ENCODE measurements at regions of chr17 and their contacts with region 1.

Region 1: GRCh38 chr17:79045842-79046196 is 21.9 kb downstream of the C1QTNF1 start:
- DNase-seq: peak; percentile 60
- H3K4me3 ChIP-seq: no peak overlapping the region
- H3K27ac ChIP-seq: no peak overlapping the region
- H3K4me1 ChIP-seq: no peaks in the 10 kb centered on the region
- CTCF ChIP-seq: peak; percentile 98

Region 2: GRCh38 chr17:78818932-78819331 is 226.9 kb before region 1 on chr17:
- CTCF ChIA-PET with region 1: no interaction called
- POLR2A ChIA-PET with region 1: no interaction called
- intact Hi-C with region 1: no loop called
- DNase-seq: no peak
- H3K4me3 ChIP-seq: no peak overlapping the region
- H3K27ac ChIP-seq: no peak overlapping the region
- H3K4me1 ChIP-seq: no peaks in the 10 kb centered on the region
- CTCF ChIP-seq: no peak

Region 3: GRCh38 chr17:78979780-78980623 is 65.8 kb before region 1 on chr17 and contains the start of gene LGALS3BP:
- CTCF ChIA-PET with region 1: no interaction called
- POLR2A ChIA-PET with region 1: no interaction called
- intact Hi-C with region 1: no loop called
- DNase-seq: no peak
- H3K4me3 ChIP-seq: no peak within 1 kb of the TSS
- H3K27ac ChIP-seq: no peak within 1 kb of the TSS
- H3K4me1 ChIP-seq: peaks cover 10% of the 10 kb centered on the region
- CTCF ChIP-seq: no peak
- total RNA-seq, gene LGALS3BP: 0.88 TPM in 1 of 2 replicates, not detected in the other

Region 4: GRCh38 chr17:78993241-78993956 is 52.4 kb before region 1 on chr17:
- CTCF ChIA-PET with region 1: no interaction called
- POLR2A ChIA-PET with region 1: no interaction called
- intact Hi-C with region 1: loop called (anchors 5 kb)
- DNase-seq: peak; percentile 63
- H3K4me3 ChIP-seq: no peak overlapping the region
- H3K27ac ChIP-seq: no peak overlapping the region
- H3K4me1 ChIP-seq: no peaks in the 10 kb centered on the region
- CTCF ChIP-seq: peak; percentile 96

Region 5: GRCh38 chr17:79082311-79083190 is 36.7 kb after region 1 on chr17:
- CTCF ChIA-PET with region 1: interaction called, 5 read pairs
- POLR2A ChIA-PET with region 1: no interaction called
- intact Hi-C with region 1: loop called (anchors 2 kb)
- DNase-seq: peak; percentile 47
- H3K4me3 ChIP-seq: no peak overlapping the region
- H3K27ac ChIP-seq: no peak overlapping the region
- H3K4me1 ChIP-seq: no peaks in the 10 kb centered on the region
- CTCF ChIP-seq: peak; percentile 91

Measured in OCI-LY7 (cell line).